ENCODE measurements at regions of chr18 and their contacts with region 1.

Region 1: DNA sequence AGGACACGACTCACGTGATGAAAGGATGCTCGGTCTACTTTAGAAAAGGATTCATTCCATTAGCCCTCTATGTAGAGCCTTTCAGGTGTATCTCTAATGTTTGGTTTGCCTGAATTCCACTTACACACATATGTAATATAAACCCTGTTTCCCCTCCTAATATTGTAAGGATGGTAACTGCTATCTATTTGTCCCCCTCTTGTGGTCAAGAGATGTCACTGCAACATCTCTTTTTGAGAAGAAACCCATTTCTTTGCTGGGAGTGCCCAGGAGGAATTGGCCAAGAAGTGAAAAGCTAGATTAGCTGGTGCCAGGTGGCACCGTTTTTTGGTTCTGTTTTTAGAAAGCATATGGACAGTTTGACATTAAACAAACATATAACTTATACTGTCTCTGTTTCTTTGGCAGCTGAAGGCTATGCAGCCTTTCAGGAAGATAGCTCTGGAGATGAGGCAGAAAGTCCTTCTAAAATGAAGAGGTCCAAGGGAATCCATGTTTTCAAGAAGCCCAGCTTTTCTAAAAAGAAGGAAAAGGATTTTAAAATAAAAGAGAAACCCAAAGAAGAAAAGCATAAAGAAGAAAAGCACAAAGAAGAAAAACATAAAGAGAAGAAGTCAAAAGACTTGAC is 41.2 kb downstream of the RALBP1 start:
- DNase-seq: no peak
- H3K4me3 ChIP-seq: no peak overlapping the region
- CTCF ChIP-seq: no peak
- POLR2A ChIP-seq: no peak

Region 2: DNA sequence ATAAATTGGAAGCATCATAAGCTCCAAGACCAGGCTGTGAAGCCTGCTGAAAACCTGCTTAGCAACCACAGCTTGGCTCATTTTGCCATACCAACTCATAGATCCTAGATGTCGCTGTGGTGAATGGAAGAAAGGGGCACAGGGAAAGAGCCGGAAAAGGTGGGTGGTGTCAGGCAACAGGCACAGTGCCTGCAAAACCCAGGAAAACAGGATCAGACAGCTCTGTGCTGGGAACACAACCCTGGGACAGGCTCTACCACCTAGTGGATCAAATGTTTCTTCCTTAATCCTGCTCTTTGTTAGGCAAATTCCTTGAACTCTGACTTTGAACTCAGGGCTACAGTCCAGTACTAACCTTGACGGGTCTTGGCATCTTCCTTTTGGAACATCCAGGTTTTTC is 150.4 kb before region 1 on chr18:
- intact Hi-C with region 1: loop called (anchors 10 kb)
- DNase-seq: peak; percentile 61 to 86
- H3K4me3 ChIP-seq: no peak overlapping the region
- CTCF ChIP-seq: no peak
- POLR2A ChIP-seq: no peak

Measured in lower leg skin (tissue), 4 donors.